Right lobe of liver (tissue), 6 donors: ENCODE measurements at regions of chr17 and their contacts with region 1.

Region 1: DNA sequence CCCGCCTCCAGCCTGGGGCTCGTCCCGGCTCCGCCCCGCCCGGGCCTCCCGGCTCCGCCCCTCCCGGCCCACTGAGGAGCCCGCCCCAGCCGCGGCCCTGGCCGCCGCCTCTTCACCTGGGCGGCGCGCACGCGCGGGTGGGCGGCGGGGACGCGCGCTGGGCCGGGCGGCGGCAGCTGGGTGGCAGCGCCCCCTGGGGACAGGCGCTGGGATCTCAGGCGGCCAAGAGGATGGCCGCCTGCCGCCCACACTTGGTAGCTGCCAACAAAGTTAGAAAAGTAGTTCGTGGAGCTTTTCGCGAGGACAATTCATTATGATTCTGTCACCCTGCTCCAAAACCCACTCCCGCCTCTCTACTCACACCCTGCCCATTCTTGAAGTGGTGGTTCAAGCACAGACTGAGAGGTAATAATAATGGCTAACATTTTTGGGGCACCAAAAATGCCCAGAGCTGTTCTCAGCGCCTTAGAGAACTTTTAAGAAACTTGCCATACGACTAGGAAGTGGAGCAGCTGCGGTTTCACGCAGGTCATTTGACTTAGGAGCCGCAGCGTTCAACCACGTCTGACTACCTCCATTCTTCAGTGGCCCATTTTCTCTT is 340 bp upstream of the MYO1D start:
- DNase-seq: peak; percentile 95
- ATAC-seq: peak; percentile 95 to 99 (median 98)
- H3K4me3 ChIP-seq: peak overlapping the region; percentile 66 to 90 (median 70)
- H3K27ac ChIP-seq: peak overlapping the region; percentile 48 to 87 (median 83)
- H3K4me1 ChIP-seq: peaks cover 0 to 5% (median 2%) of the 10 kb centered on the region in 4 donors
- H3K27me3 ChIP-seq: no peaks in the 10 kb centered on the region
- CTCF ChIP-seq: peak; percentile 73 to 100 (median 80)
- POLR2A ChIP-seq: no peak

Region 2: DNA sequence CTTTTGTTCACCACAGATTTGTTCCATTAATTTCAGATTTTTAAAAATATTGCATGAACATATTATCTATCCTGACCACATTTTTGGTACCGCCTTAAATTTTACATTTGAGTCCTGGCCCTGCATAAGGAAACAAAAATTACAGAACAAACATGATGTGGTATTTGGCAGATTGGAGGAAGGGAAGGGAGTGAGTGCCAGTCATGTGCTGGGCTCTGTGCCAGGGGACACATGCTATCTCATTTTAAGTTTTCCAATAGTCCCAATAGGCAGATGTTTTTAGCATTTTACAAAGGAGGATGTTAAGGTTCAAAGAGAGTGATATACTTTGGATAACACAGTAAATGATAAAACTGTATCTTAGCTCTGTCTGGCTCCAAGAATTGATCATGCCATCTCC is 205.4 kb before region 1 on chr17:
- intact Hi-C with region 1: no loop called
- DNase-seq: peak; percentile 62 to 67 (median 65)
- ATAC-seq: peak in 3 of 4 donors; percentile 56 to 74 (median 57)
- H3K4me3 ChIP-seq: no peak overlapping the region
- H3K27ac ChIP-seq: no peak overlapping the region
- H3K4me1 ChIP-seq: no peaks in the 10 kb centered on the region
- H3K27me3 ChIP-seq: no peaks in the 10 kb centered on the region
- CTCF ChIP-seq: no peak
- POLR2A ChIP-seq: no peak

Region 3: GRCh38 chr17:32783602-32784001 is 93.7 kb before region 1 on chr17:
- intact Hi-C with region 1: loop called (anchors 5 to 10 kb)
- DNase-seq: no peak
- ATAC-seq: peak; percentile 78 to 89 (median 84)
- H3K4me3 ChIP-seq: no peak overlapping the region
- H3K27ac ChIP-seq: no peak overlapping the region
- H3K4me1 ChIP-seq: no peaks in the 10 kb centered on the region
- H3K27me3 ChIP-seq: no peaks in the 10 kb centered on the region
- CTCF ChIP-seq: peak; percentile 74 to 87 (median 80)
- POLR2A ChIP-seq: no peak